ENCODE measurements at regions of chr4 and their contacts with region 1.

Region 1: DNA sequence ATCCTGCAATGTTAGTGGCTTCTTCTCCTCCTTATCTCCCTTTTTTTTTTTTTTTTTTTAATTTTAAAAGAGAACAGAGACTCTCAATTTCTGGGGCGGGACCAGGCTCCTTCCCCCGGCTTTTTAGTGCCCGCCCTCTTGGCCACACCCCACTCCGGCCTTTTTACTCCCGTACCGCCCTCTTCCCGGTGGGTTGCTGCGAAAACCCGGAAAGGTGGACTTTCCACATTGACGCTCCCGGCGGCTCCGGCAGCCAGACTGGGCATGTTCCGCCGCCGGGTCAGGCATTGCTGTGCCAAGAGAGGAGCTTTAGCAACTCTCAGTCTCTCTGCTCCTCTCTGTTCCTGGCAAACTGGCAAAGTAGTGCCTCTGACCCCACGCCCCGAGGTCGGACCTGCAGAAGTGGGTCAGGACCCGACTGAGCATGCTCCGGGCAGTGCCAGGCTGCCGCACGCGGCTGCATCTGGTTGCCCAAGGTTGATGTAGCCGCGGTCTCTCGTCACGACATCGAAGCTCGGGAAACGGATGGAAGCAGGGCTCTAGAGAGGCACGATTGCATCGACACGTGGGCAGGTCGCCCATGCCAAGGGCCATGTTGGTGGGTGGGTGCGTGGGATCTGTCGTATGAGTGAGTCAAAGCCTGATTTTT is 1.1 kb upstream of the MFAP3L start:
- DNase-seq: peak; percentile 86
- H3K4me3 ChIP-seq: peak overlapping the region; percentile 37 to 93 (median 92)
- H3K27ac ChIP-seq: no peak overlapping the region
- H3K4me1 ChIP-seq: peaks cover 11% of the 10 kb centered on the region
- H3K27me3 ChIP-seq: peaks cover 26 to 55% of the 10 kb centered on the region in 2 experiments
- CTCF ChIP-seq: no peak
- POLR2A ChIP-seq: no peak

Region 2: GRCh38 chr4:169619959-169620879 is 407.1 kb before region 1 on chr4 and contains the start of gene CLCN3:
- CTCF ChIA-PET with region 1: no interaction called
- POLR2A ChIA-PET with region 1: no interaction called
- dilution Hi-C with region 1: no loop called
- intact Hi-C with region 1: loop called (anchors 1 kb)
- DNase-seq: peak; percentile 98
- H3K4me3 ChIP-seq: peak within 1 kb of the TSS; percentile 81 to 98 (median 91)
- H3K27ac ChIP-seq: peak within 1 kb of the TSS; percentile 92
- H3K4me1 ChIP-seq: peaks cover 19% of the 10 kb centered on the region
- H3K27me3 ChIP-seq: no peaks in the 10 kb centered on the region
- CTCF ChIP-seq: peak in 1 of 2 donors; percentile 14
- POLR2A ChIP-seq: peak; percentile 94
- total RNA-seq, gene CLCN3: 49.0 and 51.4 TPM in 2 replicates

Region 3: DNA sequence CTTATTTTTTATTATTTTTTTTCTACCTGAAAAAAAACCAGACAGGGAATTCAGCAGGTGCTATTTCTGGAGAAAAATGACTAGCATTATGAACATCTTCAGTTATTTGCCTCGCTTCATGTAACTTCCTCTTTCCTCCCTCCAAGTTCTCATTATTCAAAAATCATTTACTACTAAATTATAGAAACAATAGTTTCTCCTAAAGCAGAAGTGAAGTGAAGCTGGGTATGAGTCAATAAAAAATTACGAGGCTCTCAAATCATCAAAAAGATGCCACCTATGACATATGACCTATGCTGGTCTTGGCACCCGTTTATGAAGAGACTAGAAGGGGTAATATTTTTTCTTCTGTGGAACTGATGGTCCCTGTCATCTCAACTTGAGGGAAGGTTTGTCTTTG is 207.5 kb after region 1 on chr4:
- CTCF ChIA-PET with region 1: no interaction called
- POLR2A ChIA-PET with region 1: no interaction called
- dilution Hi-C with region 1: no loop called
- intact Hi-C with region 1: no loop called
- DNase-seq: no peak
- H3K4me3 ChIP-seq: no peak overlapping the region
- H3K27ac ChIP-seq: no peak overlapping the region
- H3K4me1 ChIP-seq: no peaks in the 10 kb centered on the region
- H3K27me3 ChIP-seq: no peaks in the 10 kb centered on the region
- CTCF ChIP-seq: no peak
- POLR2A ChIP-seq: no peak

Measured in endothelial cell of umbilical vein (primary cell).